ENCODE measurements at regions of chr3 and their contacts with region 1.

Region 1: DNA sequence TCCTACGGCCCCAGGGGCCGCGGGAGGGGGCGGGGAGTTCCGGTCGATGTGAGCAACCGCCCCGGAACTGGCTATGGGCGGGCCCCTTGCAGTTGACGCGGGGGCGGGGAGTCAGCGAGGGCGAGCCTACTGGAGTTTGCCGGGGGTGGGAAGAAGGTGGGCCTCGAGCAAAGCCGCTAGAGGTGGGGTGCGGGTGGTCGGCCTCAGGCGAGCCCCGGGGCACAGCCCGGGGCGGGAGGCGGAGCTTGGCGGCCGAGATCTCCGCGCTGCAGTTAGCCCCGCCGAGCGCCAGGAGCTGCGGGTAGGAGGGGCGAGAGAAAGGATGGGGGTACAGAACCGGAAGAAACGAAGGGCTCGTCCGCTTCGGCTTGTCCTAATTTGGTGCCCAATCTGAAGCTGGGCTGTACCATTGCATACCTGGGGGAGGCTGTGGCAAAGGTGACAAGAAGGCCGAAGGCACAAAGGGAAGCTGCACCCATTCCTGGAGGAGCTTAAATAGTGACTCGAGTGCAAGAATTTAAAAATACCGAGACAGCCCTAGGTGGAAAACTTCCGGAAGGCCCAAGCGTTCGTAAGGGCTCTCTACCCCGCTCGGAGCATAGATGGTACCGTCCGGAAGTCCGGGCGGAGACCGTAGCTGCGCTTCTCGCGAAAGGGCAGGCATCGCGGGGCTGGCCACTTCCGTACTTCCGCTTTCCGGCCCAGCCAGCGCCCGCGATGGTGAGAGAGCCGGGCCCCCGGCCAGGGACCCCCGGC is at the starts of genes ARPC4 and TADA3:
- DNase-seq: peak; percentile 96
- ATAC-seq: peak; percentile 92
- H3K4me3 Mint-ChIP-seq: peak within 1 kb of the TSS; percentile 96
- H3K27ac Mint-ChIP-seq: peak within 1 kb of the TSS; percentile 100
- H3K4me1 Mint-ChIP-seq: peaks cover 53% of the 10 kb centered on the region
- H3K27me3 Mint-ChIP-seq: no peaks in the 10 kb centered on the region
- total RNA-seq, gene ARPC4: 317 to 321 TPM
- total RNA-seq, gene TADA3: 83.2 to 85.6 TPM

Region 2: DNA sequence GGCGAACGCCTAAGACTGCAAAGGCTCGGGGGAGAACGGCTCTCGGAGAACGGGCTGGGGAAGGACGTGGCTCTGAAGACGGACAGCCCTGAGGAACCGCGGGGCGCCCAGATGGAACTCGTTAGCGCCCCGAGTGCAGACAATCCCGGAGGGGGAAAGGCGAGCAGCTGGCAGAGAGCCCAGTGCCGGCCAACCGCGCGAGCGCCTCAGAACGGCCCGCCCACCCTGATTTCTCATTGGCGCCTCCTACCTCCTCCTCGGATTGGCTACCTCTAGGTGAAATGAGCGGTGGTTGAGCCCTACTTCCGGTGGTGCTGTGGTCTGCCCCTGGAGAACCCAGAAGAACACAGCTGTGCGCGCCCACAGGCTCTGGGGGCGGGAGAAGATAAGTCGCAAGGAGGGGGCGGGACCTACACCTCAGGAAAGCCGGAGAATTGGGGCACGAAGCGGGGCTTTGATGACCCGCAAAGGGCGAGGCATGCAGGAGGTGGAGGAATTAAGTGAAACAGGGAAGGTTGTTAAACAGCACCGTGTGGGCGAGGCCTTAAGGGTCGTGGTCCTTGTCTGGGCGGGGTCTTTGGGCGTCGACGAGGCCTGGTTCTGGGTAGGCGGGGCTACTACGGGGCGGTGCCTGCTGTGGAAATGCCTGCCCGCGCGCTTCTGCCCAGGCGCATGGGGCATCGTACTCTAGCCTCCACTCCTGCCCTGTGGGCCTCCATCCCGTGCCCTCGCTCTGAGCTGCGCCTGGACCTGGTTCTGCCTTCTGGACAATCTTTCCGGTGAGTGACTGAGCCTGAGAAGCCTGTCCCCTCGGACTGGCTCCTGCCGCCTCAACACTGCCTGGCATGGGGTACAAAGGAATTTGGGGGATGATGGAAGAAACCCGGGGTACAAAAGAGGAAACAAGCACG is 42.7 kb before region 1 on chr3 and contains the start of gene OGG1:
- CTCF ChIA-PET with region 1: no interaction called
- POLR2A ChIA-PET with region 1: interaction called, 19 read pairs
- DNase-seq: peak; percentile 99
- ATAC-seq: peak; percentile 94
- H3K4me3 Mint-ChIP-seq: peak within 1 kb of the TSS; percentile 98
- H3K27ac Mint-ChIP-seq: peak within 1 kb of the TSS; percentile 95
- H3K4me1 Mint-ChIP-seq: peaks cover 74% of the 10 kb centered on the region
- H3K27me3 Mint-ChIP-seq: no peaks in the 10 kb centered on the region
- total RNA-seq, gene OGG1: 36.9 to 37.7 TPM

Region 3: GRCh38 chr3:9769426-9770275 is 22.9 kb before region 1 on chr3 and contains the start of gene CAMK1:
- CTCF ChIA-PET with region 1: interaction called, 4 read pairs
- POLR2A ChIA-PET with region 1: interaction called, 23 read pairs
- DNase-seq: peak; percentile 72
- ATAC-seq: peak; percentile 95
- H3K4me3 Mint-ChIP-seq: peak within 1 kb of the TSS; percentile 79
- H3K27ac Mint-ChIP-seq: peak within 1 kb of the TSS; percentile 83
- H3K4me1 Mint-ChIP-seq: peaks cover 39% of the 10 kb centered on the region
- H3K27me3 Mint-ChIP-seq: no peaks in the 10 kb centered on the region
- total RNA-seq, gene CAMK1: 33.5 to 35.7 TPM

Region 4: GRCh38 chr3:9779721-9780457 is 12.7 kb before region 1 on chr3:
- CTCF ChIA-PET with region 1: interaction called, 5 read pairs
- POLR2A ChIA-PET with region 1: interaction called, 38 read pairs
- DNase-seq: peak; percentile 77
- ATAC-seq: peak; percentile 82
- H3K4me3 Mint-ChIP-seq: peak overlapping the region; percentile 20
- H3K27ac Mint-ChIP-seq: peak overlapping the region; percentile 97
- H3K4me1 Mint-ChIP-seq: peaks cover 66% of the 10 kb centered on the region
- H3K27me3 Mint-ChIP-seq: no peaks in the 10 kb centered on the region

Region 5: DNA sequence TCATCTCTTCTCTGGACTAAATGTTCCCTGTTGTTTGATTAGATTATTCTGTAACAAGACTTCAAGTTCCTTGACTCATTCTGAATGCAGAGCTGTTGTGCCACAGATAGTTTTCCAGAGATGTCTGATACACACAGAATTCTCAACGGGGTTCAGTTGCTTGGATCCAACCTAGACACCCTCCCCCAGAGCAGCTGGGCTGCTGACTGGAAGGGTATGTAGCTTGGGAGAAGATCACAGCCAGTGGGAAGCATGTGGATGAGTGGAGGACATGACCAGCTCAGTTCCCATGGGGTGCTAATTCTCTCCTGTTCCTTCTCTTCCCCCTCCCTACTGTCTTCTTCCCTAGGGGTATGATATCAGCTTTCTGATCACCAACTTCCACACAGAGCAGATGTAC is 10.9 kb after region 1 on chr3:
- CTCF ChIA-PET with region 1: interaction called, 6 read pairs
- POLR2A ChIA-PET with region 1: interaction called, 11 read pairs
- DNase-seq: no peak
- ATAC-seq: no peak
- H3K4me3 Mint-ChIP-seq: no peak overlapping the region
- H3K27ac Mint-ChIP-seq: no peak overlapping the region
- H3K4me1 Mint-ChIP-seq: peaks cover 36% of the 10 kb centered on the region
- H3K27me3 Mint-ChIP-seq: no peaks in the 10 kb centered on the region

Region 6: DNA sequence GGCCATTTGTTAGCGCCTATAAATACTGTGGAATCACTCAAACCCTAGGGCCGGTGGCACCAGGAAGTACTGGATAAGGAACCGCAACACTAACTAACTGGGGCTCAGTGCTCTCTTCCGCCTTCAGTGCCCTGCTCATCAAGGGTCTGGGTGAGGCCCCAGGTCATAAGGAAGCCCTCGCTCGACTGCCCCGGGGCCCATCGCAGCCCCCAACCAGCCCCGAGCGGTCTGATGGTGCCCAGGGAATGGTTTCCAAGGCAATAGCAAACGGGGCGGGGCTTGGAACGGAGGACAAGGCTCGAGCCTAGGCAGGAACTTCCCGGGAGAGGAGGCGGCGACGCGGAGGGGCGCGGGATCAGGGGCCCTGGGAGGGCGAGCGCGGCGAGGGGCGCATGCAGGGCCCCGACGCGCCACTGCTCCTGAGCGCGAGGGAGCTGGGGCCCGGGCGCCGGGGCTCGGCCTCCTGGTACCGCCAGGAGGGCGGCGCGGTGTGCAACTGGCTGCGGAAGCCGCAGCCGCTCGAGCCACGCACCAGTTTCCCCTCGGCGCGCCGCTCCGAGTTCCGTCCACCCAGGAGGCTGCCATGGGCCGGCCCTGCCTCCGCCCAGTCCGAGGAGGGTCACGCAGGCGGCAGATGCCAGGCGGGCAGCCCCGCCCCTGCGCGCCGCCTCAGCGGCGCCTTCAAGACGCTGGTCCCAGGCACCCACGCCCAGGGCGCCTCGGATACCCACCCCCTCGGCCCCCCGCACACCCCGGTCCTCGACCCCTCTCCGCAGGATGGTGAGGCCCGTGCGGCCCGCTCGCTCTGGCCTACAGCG is 17.2 kb after region 1 on chr3 and contains the start of gene TTLL3:
- CTCF ChIA-PET with region 1: interaction called, 6 read pairs
- POLR2A ChIA-PET with region 1: interaction called, 11 read pairs
- DNase-seq: peak; percentile 54
- ATAC-seq: peak; percentile 73
- H3K4me3 Mint-ChIP-seq: peak within 1 kb of the TSS; percentile 80
- H3K27ac Mint-ChIP-seq: peak within 1 kb of the TSS; percentile 88
- H3K4me1 Mint-ChIP-seq: peaks cover 48% of the 10 kb centered on the region
- H3K27me3 Mint-ChIP-seq: no peaks in the 10 kb centered on the region
- total RNA-seq, gene TTLL3: 53.7 to 55.2 TPM

Measured in activated CD8-positive, alpha-beta T cell treated with anti-CD3 and anti-CD28 coated beads, Interleukin-2, amount 10 ng/mL, durations not matched to agents 7 days and 5 days (primary cell).